ENCODE measurements at regions of chr11 and their contacts with region 1.

Region 1: GRCh38 chr11:32960553-32961164 is 55.0 kb upstream of the DEPDC7 start:
- DNase-seq: peak; percentile 40
- H3K4me3 ChIP-seq: no peak overlapping the region
- H3K27ac ChIP-seq: no peak overlapping the region
- H3K4me1 ChIP-seq: no peaks in the 10 kb centered on the region
- H3K27me3 ChIP-seq: no peaks in the 10 kb centered on the region
- CTCF ChIP-seq: peak; percentile 50 to 63

Region 2: GRCh38 chr11:32809313-32809712 is 151.3 kb before region 1 on chr11:
- CTCF ChIA-PET with region 1: no interaction called
- dilution Hi-C with region 1: no loop called
- in situ Hi-C with region 1: no loop called
- intact Hi-C with region 1: loop called (anchors 1 kb)
- DNase-seq: peak; percentile 67
- H3K4me3 ChIP-seq: no peak overlapping the region
- H3K27ac ChIP-seq: no peak overlapping the region
- H3K4me1 ChIP-seq: no peaks in the 10 kb centered on the region
- H3K27me3 ChIP-seq: no peaks in the 10 kb centered on the region
- CTCF ChIP-seq: peak; percentile 90 to 92